ENCODE measurements at regions of chr13 and their contacts with region 1.

Region 1: GRCh38 chr13:51502153-51502651 is 49.4 kb upstream of the INTS6 start:
- DNase-seq: peak; percentile 76
- H3K4me3 ChIP-seq: no peak overlapping the region
- H3K27ac ChIP-seq: peak overlapping the region; percentile 95
- H3K4me1 ChIP-seq: peaks cover 47% of the 10 kb centered on the region
- H3K27me3 ChIP-seq: no peaks in the 10 kb centered on the region
- CTCF ChIP-seq: no peak

Region 2: GRCh38 chr13:51148952-51149573 is 353.1 kb before region 1 on chr13:
- CTCF ChIA-PET with region 1: no interaction called
- POLR2A ChIA-PET with region 1: no interaction called
- intact Hi-C with region 1: loop called (anchors 1 kb)
- DNase-seq: peak; percentile 90
- H3K4me3 ChIP-seq: peak overlapping the region; percentile 17
- H3K27ac ChIP-seq: peak overlapping the region; percentile 91
- H3K4me1 ChIP-seq: peaks cover 22% of the 10 kb centered on the region
- H3K27me3 ChIP-seq: no peaks in the 10 kb centered on the region
- CTCF ChIP-seq: peak; percentile 85

Region 3: GRCh38 chr13:51222037-51222685 is 280.0 kb before region 1 on chr13 and contains the start of gene FAM124A:
- CTCF ChIA-PET with region 1: no interaction called
- POLR2A ChIA-PET with region 1: interaction called, 12 read pairs
- intact Hi-C with region 1: no loop called
- DNase-seq: peak; percentile 71
- H3K4me3 ChIP-seq: peak within 1 kb of the TSS; percentile 64
- H3K27ac ChIP-seq: peak within 1 kb of the TSS; percentile 44
- H3K4me1 ChIP-seq: peaks cover 16% of the 10 kb centered on the region
- H3K27me3 ChIP-seq: peaks cover 4% of the 10 kb centered on the region
- CTCF ChIP-seq: no peak
- total RNA-seq, gene FAM124A: 2.1 and 2.2 TPM in 2 replicates

Region 4: GRCh38 chr13:51452361-51453206 is 49.6 kb before region 1 on chr13 and contains the start of gene INTS6:
- CTCF ChIA-PET with region 1: no interaction called
- POLR2A ChIA-PET with region 1: interaction called, 3 read pairs
- intact Hi-C with region 1: loop called (anchors 2 kb)
- DNase-seq: peak; percentile 100
- H3K4me3 ChIP-seq: peak within 1 kb of the TSS; percentile 95
- H3K27ac ChIP-seq: peak within 1 kb of the TSS; percentile 99
- H3K4me1 ChIP-seq: peaks cover 35% of the 10 kb centered on the region
- H3K27me3 ChIP-seq: no peaks in the 10 kb centered on the region
- CTCF ChIP-seq: no peak
- total RNA-seq, gene INTS6: 86.2 and 90.4 TPM in 2 replicates

Region 5: GRCh38 chr13:51583875-51584730 is 81.9 kb after region 1 on chr13 and contains the start of gene WDFY2:
- CTCF ChIA-PET with region 1: no interaction called
- POLR2A ChIA-PET with region 1: no interaction called
- intact Hi-C with region 1: loop called (anchors 2 kb)
- DNase-seq: peak; percentile 100
- H3K4me3 ChIP-seq: peak within 1 kb of the TSS; percentile 93
- H3K27ac ChIP-seq: peak within 1 kb of the TSS; percentile 94
- H3K4me1 ChIP-seq: peaks cover 20% of the 10 kb centered on the region
- H3K27me3 ChIP-seq: no peaks in the 10 kb centered on the region
- CTCF ChIP-seq: no peak
- total RNA-seq, gene WDFY2: 45.5 and 50.3 TPM in 2 replicates

Region 6: GRCh38 chr13:51643882-51644281 is 141.7 kb after region 1 on chr13:
- CTCF ChIA-PET with region 1: no interaction called
- POLR2A ChIA-PET with region 1: no interaction called
- intact Hi-C with region 1: loop called (anchors 5 kb)
- DNase-seq: peak; percentile 88
- H3K4me3 ChIP-seq: peak overlapping the region; percentile 14
- H3K27ac ChIP-seq: peak overlapping the region; percentile 81
- H3K4me1 ChIP-seq: peaks cover 73% of the 10 kb centered on the region
- H3K27me3 ChIP-seq: no peaks in the 10 kb centered on the region
- CTCF ChIP-seq: no peak

Region 7: GRCh38 chr13:51797664-51798488 is 295.7 kb after region 1 on chr13:
- CTCF ChIA-PET with region 1: no interaction called
- POLR2A ChIA-PET with region 1: no interaction called
- intact Hi-C with region 1: loop called (anchors 10 kb)
- DNase-seq: peak; percentile 63
- H3K4me3 ChIP-seq: no peak overlapping the region
- H3K27ac ChIP-seq: no peak overlapping the region
- H3K4me1 ChIP-seq: peaks cover 13% of the 10 kb centered on the region
- H3K27me3 ChIP-seq: no peaks in the 10 kb centered on the region
- CTCF ChIP-seq: peak; percentile 58

Measured in A673 (cell line).